MCF 10A (cell line): ENCODE measurements at regions of chr21 and their contacts with region 1.

Region 1: GRCh38 chr21:14382835-14383594 is at the start of gene HSPA13:
- DNase-seq: peak; percentile 100
- H3K4me3 Mint-ChIP-seq: peak within 1 kb of the TSS; percentile 97
- H3K27ac Mint-ChIP-seq: peak within 1 kb of the TSS; percentile 97
- H3K4me1 Mint-ChIP-seq: peaks cover 8% of the 10 kb centered on the region
- H3K27me3 Mint-ChIP-seq: no peaks in the 10 kb centered on the region
- CTCF ChIP-seq: no peak
- total RNA-seq, gene HSPA13: 97.5 and 126 TPM in 2 replicates

Region 2: GRCh38 chr21:14306151-14306907 is 76.7 kb before region 1 on chr21:
- CTCF ChIA-PET with region 1: interaction called, 10 read pairs
- POLR2A ChIA-PET with region 1: interaction called, 17 read pairs
- intact Hi-C with region 1: loop called (anchors 2 kb)
- DNase-seq: peak; percentile 46
- H3K4me3 Mint-ChIP-seq: no peak overlapping the region
- H3K27ac Mint-ChIP-seq: no peak overlapping the region
- H3K4me1 Mint-ChIP-seq: peaks cover 8% of the 10 kb centered on the region
- H3K27me3 Mint-ChIP-seq: no peaks in the 10 kb centered on the region
- CTCF ChIP-seq: peak; percentile 55

Region 3: DNA sequence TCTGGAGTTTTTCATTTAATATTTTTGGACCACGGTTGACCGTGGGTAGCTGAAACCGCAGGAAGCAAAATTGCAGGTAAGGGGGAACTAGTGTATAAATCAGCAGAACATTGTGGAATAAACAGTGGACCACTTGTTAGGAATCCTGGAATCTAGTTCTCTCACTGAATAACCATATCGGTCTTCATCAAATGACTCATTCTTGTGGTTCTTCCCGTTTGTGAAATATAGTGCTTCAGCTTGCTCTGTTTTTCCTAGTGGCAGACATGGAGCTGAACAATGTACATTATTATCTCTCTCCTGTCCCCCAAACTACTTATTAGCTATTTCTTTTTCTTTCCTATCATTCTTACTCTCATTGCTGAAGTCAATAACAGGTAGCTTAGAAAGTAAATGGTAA is 62.0 kb before region 1 on chr21:
- CTCF ChIA-PET with region 1: interaction called, 4 read pairs
- POLR2A ChIA-PET with region 1: interaction called, 10 read pairs
- intact Hi-C with region 1: no loop called
- DNase-seq: peak; percentile 61
- H3K4me3 Mint-ChIP-seq: no peak overlapping the region
- H3K27ac Mint-ChIP-seq: no peak overlapping the region
- H3K4me1 Mint-ChIP-seq: peaks cover 11% of the 10 kb centered on the region
- H3K27me3 Mint-ChIP-seq: no peaks in the 10 kb centered on the region
- CTCF ChIP-seq: no peak

Region 4: GRCh38 chr21:14361958-14362357 is 21.1 kb before region 1 on chr21:
- CTCF ChIA-PET with region 1: interaction called, 4 read pairs
- POLR2A ChIA-PET with region 1: interaction called, 139 read pairs
- intact Hi-C with region 1: no loop called
- DNase-seq: peak; percentile 93
- H3K4me3 Mint-ChIP-seq: no peak overlapping the region
- H3K27ac Mint-ChIP-seq: peak overlapping the region; percentile 67
- H3K4me1 Mint-ChIP-seq: peaks cover 33% of the 10 kb centered on the region
- H3K27me3 Mint-ChIP-seq: no peaks in the 10 kb centered on the region
- CTCF ChIP-seq: no peak

Region 5: GRCh38 chr21:14533504-14534428 is 150.8 kb after region 1 on chr21:
- CTCF ChIA-PET with region 1: no interaction called
- POLR2A ChIA-PET with region 1: no interaction called
- intact Hi-C with region 1: loop called (anchors 5 kb)
- DNase-seq: peak; percentile 81
- H3K4me3 Mint-ChIP-seq: peak overlapping the region; percentile 26
- H3K27ac Mint-ChIP-seq: peak overlapping the region; percentile 91
- H3K4me1 Mint-ChIP-seq: peaks cover 23% of the 10 kb centered on the region
- H3K27me3 Mint-ChIP-seq: no peaks in the 10 kb centered on the region
- CTCF ChIP-seq: no peak

Region 6: DNA sequence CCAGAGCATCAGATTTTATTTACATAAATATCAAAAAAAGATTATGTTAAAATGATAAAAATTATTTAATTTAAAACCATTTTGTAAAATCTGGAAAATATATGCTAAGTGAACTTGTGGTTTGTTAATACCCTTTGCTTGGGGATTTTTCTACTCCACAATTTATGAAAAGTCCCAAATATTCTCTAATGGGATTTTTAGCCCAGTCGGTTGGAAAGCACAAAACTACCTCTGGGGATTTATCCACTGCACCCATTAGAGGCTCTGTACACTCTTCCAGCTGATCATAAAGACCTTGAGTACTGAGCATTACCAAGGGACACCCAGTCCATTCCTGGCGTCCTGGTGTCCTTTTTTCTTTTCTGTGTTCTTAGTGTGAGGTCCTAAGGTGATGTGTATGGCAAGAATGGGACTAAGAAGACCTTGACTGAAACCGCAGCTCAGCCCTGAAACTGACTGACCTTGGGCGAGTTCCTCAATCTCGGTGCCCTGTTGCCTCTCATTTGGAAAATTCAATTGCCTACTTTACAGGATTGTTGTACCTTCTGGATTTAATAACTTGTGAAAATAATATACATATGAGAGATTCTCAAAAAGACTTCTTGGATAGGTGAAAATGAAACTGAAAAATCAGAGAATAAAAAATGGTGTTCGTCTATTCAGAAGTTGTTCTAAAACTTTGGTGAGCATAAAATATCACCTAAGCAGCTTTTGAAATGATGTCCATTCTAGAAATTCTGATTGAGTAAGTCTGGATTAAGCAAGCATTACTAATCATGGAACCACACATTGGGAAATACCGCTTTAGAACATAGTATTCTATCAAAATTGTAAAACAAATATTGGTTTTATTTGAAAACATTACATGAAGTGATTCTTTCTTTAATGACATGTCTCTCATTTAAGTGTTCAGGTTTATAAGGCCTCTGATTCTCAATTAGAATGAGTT is 184.6 kb after region 1 on chr21:
- CTCF ChIA-PET with region 1: no interaction called
- POLR2A ChIA-PET with region 1: no interaction called
- intact Hi-C with region 1: no loop called
- DNase-seq: peak; percentile 61
- H3K4me3 Mint-ChIP-seq: no peak overlapping the region
- H3K27ac Mint-ChIP-seq: peak overlapping the region; percentile 73
- H3K4me1 Mint-ChIP-seq: peaks cover 14% of the 10 kb centered on the region
- H3K27me3 Mint-ChIP-seq: no peaks in the 10 kb centered on the region
- CTCF ChIP-seq: no peak